ENCODE measurements at regions of chr2 and their contacts with region 1.

Region 1: GRCh38 chr2:54838585-54839035 is 115.1 kb downstream of the EML6 start:
- DNase-seq: peak; percentile 81
- H3K4me3 Mint-ChIP-seq: no peak overlapping the region
- H3K27ac Mint-ChIP-seq: no peak overlapping the region
- H3K4me1 Mint-ChIP-seq: peaks cover 4% of the 10 kb centered on the region
- H3K27me3 Mint-ChIP-seq: no peaks in the 10 kb centered on the region
- CTCF ChIP-seq: peak; percentile 80

Region 2: GRCh38 chr2:54522624-54523281 is 315.9 kb before region 1 on chr2:
- CTCF ChIA-PET with region 1: interaction called, 3 read pairs
- POLR2A ChIA-PET with region 1: no interaction called
- intact Hi-C with region 1: loop called (anchors 1 kb)
- DNase-seq: peak; percentile 92
- H3K4me3 Mint-ChIP-seq: no peak overlapping the region
- H3K27ac Mint-ChIP-seq: no peak overlapping the region
- H3K4me1 Mint-ChIP-seq: peaks cover 27% of the 10 kb centered on the region
- H3K27me3 Mint-ChIP-seq: no peaks in the 10 kb centered on the region
- CTCF ChIP-seq: peak; percentile 67

Region 3: DNA sequence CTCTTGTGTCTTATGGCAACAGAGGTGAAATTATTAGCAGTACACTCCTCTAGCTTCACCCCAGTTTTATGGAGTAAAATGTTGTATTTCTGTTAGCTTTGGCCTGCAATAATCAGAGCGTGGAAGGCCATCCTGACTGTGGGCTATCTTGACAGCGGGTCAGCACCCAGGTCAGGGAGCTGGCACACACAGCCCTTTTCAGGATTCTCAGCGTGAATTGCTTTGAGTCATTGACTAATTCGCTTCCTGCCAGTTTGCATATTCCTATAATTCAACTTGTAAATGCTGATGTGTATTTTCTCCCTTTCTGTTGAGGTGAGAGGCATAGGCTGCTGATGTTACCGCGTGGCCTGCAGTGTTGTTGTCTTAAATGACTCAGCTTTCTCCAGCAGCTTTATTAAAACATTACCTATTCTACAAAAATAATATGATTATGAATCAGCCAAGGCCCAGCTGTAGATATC is 224.8 kb before region 1 on chr2:
- CTCF ChIA-PET with region 1: no interaction called
- POLR2A ChIA-PET with region 1: no interaction called
- intact Hi-C with region 1: no loop called
- DNase-seq: peak; percentile 64
- H3K4me3 Mint-ChIP-seq: no peak overlapping the region
- H3K27ac Mint-ChIP-seq: peak overlapping the region; percentile 90
- H3K4me1 Mint-ChIP-seq: peaks cover 19% of the 10 kb centered on the region
- H3K27me3 Mint-ChIP-seq: no peaks in the 10 kb centered on the region
- CTCF ChIP-seq: no peak

Region 4: DNA sequence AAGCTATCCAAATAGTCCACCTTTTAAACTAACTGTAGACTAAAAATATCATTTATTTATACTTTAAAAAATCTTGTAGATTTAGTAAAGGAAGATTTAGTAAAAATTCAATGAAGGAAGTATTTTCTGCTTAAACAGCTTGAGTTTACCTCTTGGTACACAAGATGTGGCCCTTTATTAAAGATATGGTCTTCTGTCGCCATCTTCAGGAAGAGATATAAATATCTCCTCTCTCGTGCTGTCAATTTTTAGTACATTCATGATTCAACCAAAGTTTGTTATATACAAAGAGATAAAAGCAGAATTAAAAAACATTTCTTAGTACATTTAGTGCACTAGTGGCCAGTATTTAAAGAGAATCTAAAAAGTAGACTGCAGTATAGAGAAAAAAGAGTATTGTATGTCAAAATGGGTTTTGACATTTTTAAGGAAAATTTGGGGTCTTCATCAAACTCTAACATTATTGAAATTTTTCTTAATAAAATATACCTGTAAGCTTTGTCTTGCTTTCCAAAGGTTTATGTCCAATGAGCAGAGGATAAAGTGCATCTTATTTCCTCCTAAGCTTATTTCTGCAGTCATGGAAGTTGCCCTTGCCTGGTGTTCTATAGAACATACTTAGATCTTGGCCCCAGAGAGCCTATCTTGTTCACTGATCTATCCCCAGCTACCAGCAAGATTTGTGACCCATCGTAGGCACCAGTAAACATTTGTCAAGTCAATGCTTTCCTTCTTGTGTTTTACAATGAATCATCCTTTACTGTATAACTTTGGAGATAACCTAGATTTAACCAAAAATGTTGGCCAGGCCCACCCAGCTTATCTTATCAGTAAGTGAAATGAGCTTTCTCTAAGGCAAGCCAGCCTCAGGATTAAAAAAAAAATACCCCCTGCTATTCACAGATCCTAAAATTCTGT is 133.7 kb before region 1 on chr2:
- CTCF ChIA-PET with region 1: interaction called, 23 read pairs
- POLR2A ChIA-PET with region 1: no interaction called
- intact Hi-C with region 1: no loop called
- DNase-seq: peak; percentile 77
- H3K4me3 Mint-ChIP-seq: no peak overlapping the region
- H3K27ac Mint-ChIP-seq: no peak overlapping the region
- H3K4me1 Mint-ChIP-seq: no peaks in the 10 kb centered on the region
- H3K27me3 Mint-ChIP-seq: no peaks in the 10 kb centered on the region
- CTCF ChIP-seq: peak; percentile 58

Region 5: GRCh38 chr2:54750040-54750439 is 88.6 kb before region 1 on chr2:
- CTCF ChIA-PET with region 1: interaction called, 16 read pairs
- POLR2A ChIA-PET with region 1: no interaction called
- intact Hi-C with region 1: no loop called
- DNase-seq: peak; percentile 23
- H3K4me3 Mint-ChIP-seq: no peak overlapping the region
- H3K27ac Mint-ChIP-seq: no peak overlapping the region
- H3K4me1 Mint-ChIP-seq: no peaks in the 10 kb centered on the region
- H3K27me3 Mint-ChIP-seq: no peaks in the 10 kb centered on the region
- CTCF ChIP-seq: no peak

Region 6: GRCh38 chr2:54773838-54774237 is 64.8 kb before region 1 on chr2:
- CTCF ChIA-PET with region 1: interaction called, 14 read pairs
- POLR2A ChIA-PET with region 1: interaction called, 3 read pairs
- intact Hi-C with region 1: no loop called
- DNase-seq: no peak
- H3K4me3 Mint-ChIP-seq: no peak overlapping the region
- H3K27ac Mint-ChIP-seq: no peak overlapping the region
- H3K4me1 Mint-ChIP-seq: peaks cover 30% of the 10 kb centered on the region
- H3K27me3 Mint-ChIP-seq: no peaks in the 10 kb centered on the region
- CTCF ChIP-seq: peak; percentile 17

Region 7: DNA sequence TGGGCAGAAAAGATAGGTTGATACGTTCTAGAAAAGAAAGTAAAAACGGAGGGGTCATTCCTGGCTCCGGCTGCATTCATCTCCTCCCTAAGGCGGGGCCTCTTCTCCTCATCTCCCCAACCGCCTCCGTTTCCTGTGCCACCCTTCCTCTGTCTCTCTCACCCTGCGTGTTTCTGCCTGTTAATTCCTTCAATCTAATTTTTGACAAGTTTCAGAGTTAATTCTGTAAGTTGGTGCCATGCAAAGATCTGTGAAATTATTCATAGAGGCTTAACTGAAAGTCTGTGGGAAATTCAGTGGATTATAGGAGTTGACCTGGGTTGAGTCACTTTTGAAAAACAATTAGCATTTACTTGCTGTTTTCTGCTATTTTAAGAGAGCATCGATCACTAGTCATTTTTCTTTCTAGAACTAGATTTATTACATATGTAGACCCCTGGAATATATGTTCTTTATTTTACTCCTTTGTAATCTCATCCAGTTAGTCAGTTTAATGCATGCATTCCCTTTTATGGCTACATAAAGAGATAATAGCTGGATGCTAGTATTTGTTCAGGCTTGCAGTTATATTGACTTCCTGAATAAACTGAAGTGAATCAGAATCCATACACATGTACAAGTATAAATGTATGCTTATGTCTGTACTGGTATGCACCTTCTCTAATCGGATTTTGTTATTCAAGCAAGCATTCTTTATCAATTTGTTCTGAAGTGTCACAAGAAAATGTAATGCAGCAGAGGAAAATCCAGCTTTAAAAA is 24.0 kb before region 1 on chr2:
- CTCF ChIA-PET with region 1: interaction called, 12 read pairs
- POLR2A ChIA-PET with region 1: no interaction called
- intact Hi-C with region 1: no loop called
- DNase-seq: peak; percentile 30
- H3K4me3 Mint-ChIP-seq: peak overlapping the region; percentile 66
- H3K27ac Mint-ChIP-seq: peak overlapping the region; percentile 46
- H3K4me1 Mint-ChIP-seq: peaks cover 22% of the 10 kb centered on the region
- H3K27me3 Mint-ChIP-seq: no peaks in the 10 kb centered on the region
- CTCF ChIP-seq: no peak

Region 8: GRCh38 chr2:54887850-54888545 is 49.4 kb after region 1 on chr2:
- CTCF ChIA-PET with region 1: no interaction called
- POLR2A ChIA-PET with region 1: no interaction called
- intact Hi-C with region 1: no loop called
- DNase-seq: no peak
- H3K4me3 Mint-ChIP-seq: no peak overlapping the region
- H3K27ac Mint-ChIP-seq: no peak overlapping the region
- H3K4me1 Mint-ChIP-seq: no peaks in the 10 kb centered on the region
- H3K27me3 Mint-ChIP-seq: no peaks in the 10 kb centered on the region
- CTCF ChIP-seq: no peak

Region 9: DNA sequence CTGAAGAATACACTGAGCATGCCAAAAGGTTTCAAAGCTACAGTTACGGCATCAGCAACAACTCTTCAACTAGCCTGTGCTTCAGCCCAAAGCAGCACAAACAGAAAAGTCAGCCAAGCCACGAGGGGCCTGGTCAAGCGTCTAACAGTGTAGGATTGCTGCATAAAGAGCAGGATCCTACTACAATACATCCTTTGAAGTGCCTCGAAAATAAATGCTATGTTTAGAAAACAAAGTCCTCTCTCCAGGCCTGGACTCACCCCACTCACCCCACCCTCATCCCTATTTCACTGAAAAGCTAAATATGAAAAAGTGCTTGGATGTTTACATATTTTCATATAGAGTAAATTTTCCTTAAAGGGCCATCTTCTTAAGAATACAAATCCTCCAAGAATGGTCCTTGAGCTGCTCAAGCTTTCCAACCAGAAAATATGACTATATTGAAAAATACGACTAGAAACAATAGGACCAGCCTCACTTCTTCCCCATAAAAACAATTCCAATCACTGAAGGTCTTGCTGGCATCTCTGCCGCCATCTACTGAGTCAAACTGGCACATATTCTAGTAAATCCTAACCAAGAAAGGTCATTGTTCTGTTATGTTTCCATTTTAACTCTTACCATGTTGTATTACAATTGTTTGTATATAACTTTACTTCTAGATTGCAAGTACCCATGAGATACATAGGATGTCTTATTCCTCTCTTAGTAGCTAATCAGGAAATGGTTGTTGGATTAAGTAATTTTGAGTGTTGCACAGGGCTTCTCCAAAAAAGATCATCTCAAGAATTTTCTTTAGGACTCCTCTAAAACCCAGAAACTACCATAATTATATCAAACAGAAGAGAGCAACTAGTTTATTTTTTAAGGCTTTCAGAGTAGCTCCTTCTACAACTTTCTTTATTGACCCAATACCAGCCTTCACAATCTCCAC is 329.9 kb after region 1 on chr2:
- CTCF ChIA-PET with region 1: interaction called, 5 read pairs
- POLR2A ChIA-PET with region 1: no interaction called
- intact Hi-C with region 1: loop called (anchors 5 kb)
- DNase-seq: peak; percentile 72
- H3K4me3 Mint-ChIP-seq: no peak overlapping the region
- H3K27ac Mint-ChIP-seq: no peak overlapping the region
- H3K4me1 Mint-ChIP-seq: peaks cover 13% of the 10 kb centered on the region
- H3K27me3 Mint-ChIP-seq: no peaks in the 10 kb centered on the region
- CTCF ChIP-seq: peak; percentile 81